GM12878 (cell line): ENCODE measurements at regions of chr11 and their contacts with region 1.

Region 1: DNA sequence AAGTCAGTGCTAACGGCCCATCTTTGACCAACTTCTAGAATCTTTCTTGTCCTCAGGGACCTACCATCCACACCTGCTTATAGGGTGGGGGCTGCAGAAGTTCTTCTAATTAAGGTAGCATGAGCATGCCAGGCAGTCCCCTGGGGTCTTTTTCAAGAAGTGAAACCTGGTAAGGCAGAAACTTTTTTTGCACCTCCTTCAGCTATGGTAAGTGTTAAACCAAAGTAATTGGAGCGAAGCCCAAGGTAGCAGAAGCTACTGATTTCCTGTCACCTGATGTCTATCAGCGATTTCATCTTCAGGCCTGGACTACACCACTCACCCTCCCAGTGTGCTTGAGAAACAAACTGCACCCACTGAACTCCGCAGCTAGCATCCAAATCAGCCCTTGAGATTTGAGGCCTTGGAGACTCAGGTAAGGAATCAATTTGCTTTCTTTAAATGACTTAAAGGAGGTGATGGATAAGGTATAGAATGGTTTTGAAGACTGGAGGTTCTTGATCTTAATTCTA is at the start of gene MS4A1:
- DNase-seq: peak; percentile 98
- ATAC-seq: peak; percentile 82
- H3K4me3 ChIP-seq: peak within 1 kb of the TSS; percentile 89
- H3K27ac ChIP-seq: peak within 1 kb of the TSS; percentile 93
- H3K4me1 ChIP-seq: peaks cover 21% of the 10 kb centered on the region
- H3K27me3 ChIP-seq: no peaks in the 10 kb centered on the region
- CTCF ChIP-seq: no peak
- EP300 ChIP-seq: peak; percentile 98 to 99
- POLR2A ChIP-seq: peak; percentile 90
- RAD21 ChIP-seq: 0 out of 2 replicates have a peak, but pooled peaks have one; percentile 14
- polyA plus RNA-seq, gene MS4A1: 730 to 1,013 TPM

Region 2: GRCh38 chr11:60274416-60274815 is 181.2 kb before region 1 on chr11:
- CTCF ChIA-PET with region 1: no interaction called
- POLR2A ChIA-PET with region 1: no interaction called
- RAD21 ChIA-PET with region 1: no interaction called
- SMC1A ChIA-PET with region 1: no interaction called
- in situ Hi-C with region 1: no loop called
- intact Hi-C with region 1: no loop called
- DNase-seq: no peak
- ATAC-seq: no peak
- H3K4me3 ChIP-seq: no peak overlapping the region
- H3K27ac ChIP-seq: no peak overlapping the region
- H3K4me1 ChIP-seq: no peaks in the 10 kb centered on the region
- H3K27me3 ChIP-seq: no peaks in the 10 kb centered on the region
- CTCF ChIP-seq: no peak
- EP300 ChIP-seq: no peak
- POLR2A ChIP-seq: no peak
- RAD21 ChIP-seq: no peak

Region 3: DNA sequence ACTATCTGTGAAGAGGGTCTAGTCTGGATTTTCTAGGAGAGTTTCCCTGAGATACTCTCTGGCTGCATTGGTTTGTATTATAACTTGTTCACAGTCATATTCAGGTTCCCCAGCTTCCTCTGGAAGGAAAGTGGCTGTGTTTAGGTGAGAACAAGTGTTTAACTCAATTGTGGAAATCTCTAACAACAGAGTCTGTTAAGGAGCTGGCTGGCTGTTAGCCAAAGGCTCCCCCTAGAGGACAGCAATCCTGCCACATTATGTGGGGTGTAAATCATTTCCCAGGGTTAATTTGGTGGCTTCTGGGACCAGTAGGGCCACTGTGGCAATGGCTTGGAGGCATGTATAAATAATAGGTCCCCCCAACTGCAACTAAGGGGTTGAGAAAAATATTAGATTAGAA is 110.1 kb before region 1 on chr11:
- CTCF ChIA-PET with region 1: interaction called, 21 read pairs
- POLR2A ChIA-PET with region 1: no interaction called
- RAD21 ChIA-PET with region 1: no interaction called
- SMC1A ChIA-PET with region 1: interaction called, 4 read pairs
- in situ Hi-C with region 1: no loop called
- intact Hi-C with region 1: no loop called
- DNase-seq: no peak
- ATAC-seq: peak; percentile 87
- H3K4me3 ChIP-seq: no peak overlapping the region
- H3K27ac ChIP-seq: no peak overlapping the region
- H3K4me1 ChIP-seq: peaks cover 11% of the 10 kb centered on the region
- H3K27me3 ChIP-seq: no peaks in the 10 kb centered on the region
- CTCF ChIP-seq: peak; percentile 63 to 68 (median 66)
- EP300 ChIP-seq: no peak
- POLR2A ChIP-seq: no peak
- RAD21 ChIP-seq: peak; percentile 64

Region 4: GRCh38 chr11:60378354-60378753 is 77.2 kb before region 1 on chr11 and contains the start of gene MS4A7:
- CTCF ChIA-PET with region 1: interaction called, 13 read pairs
- POLR2A ChIA-PET with region 1: interaction called, 18 read pairs
- RAD21 ChIA-PET with region 1: interaction called, 53 read pairs
- SMC1A ChIA-PET with region 1: interaction called, 97 read pairs
- in situ Hi-C with region 1: no loop called
- intact Hi-C with region 1: loop called (anchors 1 kb)
- DNase-seq: peak; percentile 93
- ATAC-seq: peak; percentile 94
- H3K4me3 ChIP-seq: peak within 1 kb of the TSS; percentile 45; the same call in 1 of the 2 replicates
- H3K27ac ChIP-seq: peak within 1 kb of the TSS; percentile 79
- H3K4me1 ChIP-seq: peaks cover 17% of the 10 kb centered on the region
- H3K27me3 ChIP-seq: no peaks in the 10 kb centered on the region
- CTCF ChIP-seq: no peak
- EP300 ChIP-seq: peak; percentile 27 to 49; a peak in 2 of 4 replicates
- POLR2A ChIP-seq: peak; percentile 60
- RAD21 ChIP-seq: peak; percentile 22; the same call in 1 of the 2 replicates
- polyA plus RNA-seq, gene MS4A7: 7.2 to 17.0 TPM

Region 5: DNA sequence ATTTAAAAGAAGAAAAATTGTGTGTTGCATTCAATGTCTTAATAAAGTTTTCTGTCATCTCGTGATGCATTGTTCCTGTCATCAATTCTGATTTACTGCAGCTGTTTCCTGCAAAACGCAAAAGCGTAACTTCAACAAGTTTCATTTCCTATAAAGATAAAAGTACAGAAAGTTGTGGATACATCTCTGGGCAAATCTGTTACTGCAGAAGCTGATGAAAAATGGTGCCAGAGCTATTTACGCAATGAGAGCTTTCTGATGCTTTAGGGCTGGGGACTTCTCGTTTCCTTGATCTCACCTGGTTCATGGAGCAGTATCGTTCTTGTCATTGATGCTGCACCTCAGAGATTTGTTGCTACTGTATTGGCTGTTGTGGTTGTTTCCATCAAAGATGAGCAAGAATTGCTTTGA is 21.5 kb after region 1 on chr11:
- CTCF ChIA-PET with region 1: interaction called, 31 read pairs
- POLR2A ChIA-PET with region 1: interaction called, 8 read pairs
- RAD21 ChIA-PET with region 1: interaction called, 18 read pairs
- SMC1A ChIA-PET with region 1: interaction called, 42 read pairs
- in situ Hi-C with region 1: no loop called
- intact Hi-C with region 1: no loop called
- DNase-seq: no peak
- ATAC-seq: peak; percentile 97
- H3K4me3 ChIP-seq: no peak overlapping the region
- H3K27ac ChIP-seq: peak overlapping the region; percentile 12; the same call in 1 of the 2 replicates
- H3K4me1 ChIP-seq: peaks cover 15% of the 10 kb centered on the region
- H3K27me3 ChIP-seq: no peaks in the 10 kb centered on the region
- CTCF ChIP-seq: no peak
- EP300 ChIP-seq: peak; percentile 60 to 63; a peak in 3 of 4 replicates
- POLR2A ChIP-seq: no peak
- RAD21 ChIP-seq: no peak

Region 6: GRCh38 chr11:60528934-60529333 is 73.3 kb after region 1 on chr11:
- CTCF ChIA-PET with region 1: no interaction called
- POLR2A ChIA-PET with region 1: no interaction called
- RAD21 ChIA-PET with region 1: no interaction called
- SMC1A ChIA-PET with region 1: no interaction called
- in situ Hi-C with region 1: no loop called
- intact Hi-C with region 1: no loop called
- DNase-seq: peak; percentile 35
- ATAC-seq: peak; percentile 95
- H3K4me3 ChIP-seq: no peak overlapping the region
- H3K27ac ChIP-seq: no peak overlapping the region
- H3K4me1 ChIP-seq: peaks cover 9% of the 10 kb centered on the region
- H3K27me3 ChIP-seq: no peaks in the 10 kb centered on the region
- CTCF ChIP-seq: no peak
- EP300 ChIP-seq: no peak
- POLR2A ChIP-seq: no peak
- RAD21 ChIP-seq: no peak

Region 7: DNA sequence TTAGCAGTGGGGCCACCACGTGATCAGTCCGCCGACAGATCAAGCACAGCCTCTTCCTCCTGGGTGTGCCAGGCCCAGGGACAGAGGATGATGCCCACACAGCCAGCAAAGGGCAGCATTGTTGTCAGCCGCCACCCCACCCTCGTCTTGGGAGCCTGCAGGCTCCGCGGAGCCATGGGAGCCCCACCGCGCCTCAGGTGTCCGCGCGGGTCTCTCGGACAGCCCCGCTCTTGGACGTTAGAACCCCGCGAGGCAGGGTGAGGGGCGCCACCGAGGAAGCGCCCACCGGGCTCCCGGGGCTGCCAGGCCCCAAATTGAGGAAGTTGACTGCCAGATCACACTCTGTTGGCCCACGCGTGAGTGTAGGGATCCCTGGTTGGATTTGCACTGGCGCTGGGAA is 159.9 kb after region 1 on chr11:
- CTCF ChIA-PET with region 1: interaction called, 3 read pairs
- POLR2A ChIA-PET with region 1: no interaction called
- RAD21 ChIA-PET with region 1: interaction called, 7 read pairs
- SMC1A ChIA-PET with region 1: interaction called, 4 read pairs
- in situ Hi-C with region 1: no loop called
- intact Hi-C with region 1: loop called (anchors 1 kb)
- DNase-seq: no peak
- ATAC-seq: no peak
- H3K4me3 ChIP-seq: no peak overlapping the region
- H3K27ac ChIP-seq: no peak overlapping the region
- H3K4me1 ChIP-seq: no peaks in the 10 kb centered on the region
- H3K27me3 ChIP-seq: no peaks in the 10 kb centered on the region
- CTCF ChIP-seq: no peak
- EP300 ChIP-seq: no peak
- POLR2A ChIP-seq: no peak
- RAD21 ChIP-seq: no peak